ENCODE measurements at regions of chr3 and their contacts with region 1.

Region 1: GRCh38 chr3:5187156-5187919 is at the start of gene EDEM1:
- DNase-seq: peak; percentile 99
- total RNA-seq, gene EDEM1: 10.3 TPM

Region 2: GRCh38 chr3:5122030-5122740 is 65.2 kb before region 1 on chr3 and contains the start of gene ARL8B:
- intact Hi-C with region 1: loop called (anchors 1 kb)
- DNase-seq: peak; percentile 95
- total RNA-seq, gene ARL8B: 60.1 TPM

Measured in cardiac septum (tissue), 1 donor.